CD8-positive, alpha-beta memory T cell (primary cell): ENCODE measurements at regions of chr10 and their contacts with region 1.

Region 1: DNA sequence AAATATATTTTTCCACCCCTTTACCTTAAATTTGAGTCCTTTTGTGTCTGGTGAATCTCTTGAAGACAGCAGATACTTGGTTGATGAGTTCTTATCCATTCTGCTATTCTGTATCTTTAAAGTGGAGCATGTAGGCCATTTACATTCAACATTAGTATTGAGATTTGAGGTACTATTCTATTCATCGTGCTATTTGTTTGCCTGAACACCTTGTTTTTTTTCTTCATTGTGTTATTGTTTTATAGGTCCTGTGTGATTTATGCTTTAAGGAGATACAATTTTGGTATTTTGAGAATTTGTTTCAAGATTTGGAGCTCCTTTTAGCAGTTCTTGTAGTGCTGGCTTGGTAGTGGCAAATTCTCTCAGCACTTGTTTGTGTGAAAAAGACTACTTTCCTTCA is 29.9 kb downstream of the GDI2 start:
- DNase-seq: no peak
- H3K4me3 ChIP-seq: no peak overlapping the region
- H3K4me3 Mint-ChIP-seq: no peak overlapping the region
- H3K27ac ChIP-seq: no peak overlapping the region
- H3K27ac Mint-ChIP-seq: peak overlapping the region in 3 of 8 donors; percentile 24 to 48 (median 32)
- H3K4me1 ChIP-seq: peaks cover 3% of the 10 kb centered on the region
- H3K4me1 Mint-ChIP-seq: peaks cover 33 to 57% (median 49%) of the 10 kb centered on the region in 3 donors
- H3K27me3 ChIP-seq: no peaks in the 10 kb centered on the region
- H3K27me3 Mint-ChIP-seq: no peaks in the 10 kb centered on the region

Region 2: GRCh38 chr10:5719546-5719945 is 63.8 kb before region 1 on chr10:
- CTCF ChIA-PET with region 1: no interaction called
- POLR2A ChIA-PET with region 1: interaction called, 11 read pairs
- DNase-seq: no peak
- H3K4me3 ChIP-seq: no peak overlapping the region
- H3K4me3 Mint-ChIP-seq: no peak overlapping the region
- H3K27ac ChIP-seq: no peak overlapping the region
- H3K27ac Mint-ChIP-seq: no peak overlapping the region
- H3K4me1 ChIP-seq: no peaks in the 10 kb centered on the region
- H3K4me1 Mint-ChIP-seq: peaks cover 18 to 56% (median 43%) of the 10 kb centered on the region in 3 donors
- H3K27me3 ChIP-seq: no peaks in the 10 kb centered on the region
- H3K27me3 Mint-ChIP-seq: no peaks in the 10 kb centered on the region